Posterior vena cava (tissue), 2 donors: ENCODE measurements at regions of chr6 and their contacts with region 1.

Region 1: GRCh38 chr6:57172136-57173055 is at the start of gene BAG2:
- DNase-seq: peak; percentile 96
- total RNA-seq, gene BAG2: 32.6 to 45.8 TPM

Region 2: GRCh38 chr6:57221936-57222742 is 49.7 kb after region 1 on chr6 and contains the start of gene RAB23:
- intact Hi-C with region 1: no loop called
- DNase-seq: peak; percentile 94
- total RNA-seq, gene RAB23: 46.6 to 73.9 TPM

Region 3: DNA sequence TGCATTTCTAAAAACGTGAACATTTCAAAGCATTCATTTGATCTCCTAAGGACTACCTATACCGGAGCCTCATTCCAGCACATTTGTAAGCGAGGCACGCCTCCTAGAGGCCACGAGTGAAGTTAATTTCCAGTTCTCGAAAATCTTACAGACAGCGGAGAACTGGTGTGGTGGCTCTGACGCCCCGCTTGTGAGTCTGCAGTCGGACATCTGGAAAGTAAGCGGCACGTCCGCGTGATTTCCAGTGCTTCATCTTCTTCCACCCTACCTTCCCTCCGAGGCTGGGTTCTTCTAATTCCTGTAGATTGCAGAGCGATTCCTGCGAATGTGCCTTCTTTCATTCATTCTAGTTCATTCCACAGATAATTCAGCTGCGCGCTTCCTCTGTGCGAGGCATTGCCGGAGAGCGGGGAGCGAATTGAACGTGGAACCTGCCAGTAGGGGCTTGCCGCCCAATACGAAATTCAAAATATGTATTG is 144.2 kb after region 1 on chr6:
- intact Hi-C with region 1: loop called in 1 of 2 experiments (anchors 10 kb)
- DNase-seq: peak; percentile 93